ENCODE measurements at regions of chr2 and their contacts with region 1.

Region 1: DNA sequence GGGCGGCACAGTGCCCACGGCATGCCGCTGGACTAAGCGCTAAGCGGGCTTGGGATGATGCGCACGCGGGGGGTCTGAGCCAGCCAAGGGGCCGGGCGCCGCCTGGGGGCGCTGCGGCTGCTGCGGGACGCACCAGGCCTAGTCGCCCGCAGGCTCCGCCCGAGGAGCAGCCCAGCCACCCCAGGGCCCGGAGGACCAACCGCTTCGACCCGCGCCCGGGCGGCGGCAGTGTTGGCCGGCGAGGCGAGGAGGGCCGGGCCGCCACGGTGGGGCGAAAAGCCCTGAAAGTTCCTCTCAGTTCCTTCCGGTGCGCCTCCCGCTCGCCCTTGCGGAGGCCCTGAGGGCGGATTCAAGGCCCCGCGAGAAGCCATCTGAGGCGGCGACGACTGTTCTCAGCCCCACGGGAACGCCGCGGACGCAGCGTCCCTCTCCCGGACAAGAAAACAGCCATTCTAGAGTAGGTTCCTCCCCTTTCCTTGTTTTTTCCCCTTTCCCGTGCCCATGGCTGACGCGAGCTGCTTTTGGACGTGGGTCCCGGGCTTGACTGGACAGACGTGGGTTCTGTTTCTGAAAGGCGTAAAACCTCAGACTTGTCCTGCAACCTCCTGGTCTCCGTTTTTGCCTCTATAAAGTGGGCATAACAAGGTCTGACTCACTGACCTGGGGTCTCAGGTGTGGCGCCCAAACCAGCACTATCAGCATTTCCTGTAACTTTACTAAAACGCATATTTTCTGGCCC is at the start of gene ANKAR:
- DNase-seq: peak; percentile 71
- H3K4me3 Mint-ChIP-seq: peak within 1 kb of the TSS; percentile 88
- H3K27ac Mint-ChIP-seq: peak within 1 kb of the TSS; percentile 91
- H3K4me1 Mint-ChIP-seq: peaks cover 23% of the 10 kb centered on the region
- H3K27me3 Mint-ChIP-seq: no peaks in the 10 kb centered on the region
- total RNA-seq, gene ANKAR: 4.2 and 5.8 TPM in 2 replicates

Region 2: GRCh38 chr2:189592353-189592984 is 82.1 kb before region 1 on chr2:
- intact Hi-C with region 1: no loop called
- DNase-seq: no peak
- H3K4me3 Mint-ChIP-seq: no peak overlapping the region
- H3K27ac Mint-ChIP-seq: no peak overlapping the region
- H3K4me1 Mint-ChIP-seq: peaks cover 10% of the 10 kb centered on the region
- H3K27me3 Mint-ChIP-seq: peaks cover 2% of the 10 kb centered on the region

Region 3: GRCh38 chr2:189698020-189698887 is 23.7 kb after region 1 on chr2:
- intact Hi-C with region 1: loop called (anchors 1 kb)
- DNase-seq: peak; percentile 6
- H3K4me3 Mint-ChIP-seq: no peak overlapping the region
- H3K27ac Mint-ChIP-seq: no peak overlapping the region
- H3K4me1 Mint-ChIP-seq: no peaks in the 10 kb centered on the region
- H3K27me3 Mint-ChIP-seq: no peaks in the 10 kb centered on the region

Region 4: DNA sequence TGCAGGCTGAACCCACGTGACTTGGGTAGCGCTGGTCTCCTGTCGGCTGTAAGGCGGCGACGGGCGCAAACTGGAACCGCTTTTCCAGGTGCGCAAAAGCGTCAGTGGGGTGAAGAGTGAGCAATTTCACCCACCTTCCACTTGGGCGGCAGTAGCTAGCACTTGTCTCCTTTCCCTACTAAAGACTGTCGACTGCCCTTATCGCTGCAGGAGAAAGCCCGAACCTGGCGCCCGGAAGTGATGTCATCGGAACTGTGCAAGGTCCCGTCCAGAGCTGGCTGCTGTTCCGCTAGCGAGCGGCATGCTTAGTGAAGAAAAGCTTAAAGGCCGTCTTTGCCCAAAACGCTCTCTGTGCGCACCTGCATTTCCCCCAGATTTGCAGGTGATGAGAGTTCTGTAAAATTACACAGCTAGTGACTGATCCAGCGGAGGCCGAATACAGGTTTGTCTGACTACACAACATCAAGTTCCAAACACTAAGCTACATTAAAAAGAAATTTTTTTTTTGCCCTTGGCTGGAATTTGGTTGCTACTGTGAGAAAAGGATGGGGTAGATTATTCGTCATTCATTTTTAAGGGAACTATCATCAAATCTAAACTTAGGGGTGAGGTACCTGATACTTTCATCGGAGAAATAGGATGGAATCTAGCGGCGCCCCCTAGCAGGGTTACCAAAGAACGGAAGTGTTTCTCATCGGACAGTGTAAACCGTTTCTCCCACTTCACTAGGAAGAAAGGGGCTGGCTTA is 88.2 kb after region 1 on chr2 and contains the start of gene OSGEPL1:
- intact Hi-C with region 1: loop called (anchors 1 kb)
- DNase-seq: peak; percentile 88
- H3K4me3 Mint-ChIP-seq: peak within 1 kb of the TSS; percentile 92
- H3K27ac Mint-ChIP-seq: peak within 1 kb of the TSS; percentile 99
- H3K4me1 Mint-ChIP-seq: peaks cover 14% of the 10 kb centered on the region
- H3K27me3 Mint-ChIP-seq: no peaks in the 10 kb centered on the region
- total RNA-seq, gene OSGEPL1: 8.3 and 11.4 TPM in 2 replicates